ENCODE measurements at regions of chr20 and their contacts with region 1.

Region 1: DNA sequence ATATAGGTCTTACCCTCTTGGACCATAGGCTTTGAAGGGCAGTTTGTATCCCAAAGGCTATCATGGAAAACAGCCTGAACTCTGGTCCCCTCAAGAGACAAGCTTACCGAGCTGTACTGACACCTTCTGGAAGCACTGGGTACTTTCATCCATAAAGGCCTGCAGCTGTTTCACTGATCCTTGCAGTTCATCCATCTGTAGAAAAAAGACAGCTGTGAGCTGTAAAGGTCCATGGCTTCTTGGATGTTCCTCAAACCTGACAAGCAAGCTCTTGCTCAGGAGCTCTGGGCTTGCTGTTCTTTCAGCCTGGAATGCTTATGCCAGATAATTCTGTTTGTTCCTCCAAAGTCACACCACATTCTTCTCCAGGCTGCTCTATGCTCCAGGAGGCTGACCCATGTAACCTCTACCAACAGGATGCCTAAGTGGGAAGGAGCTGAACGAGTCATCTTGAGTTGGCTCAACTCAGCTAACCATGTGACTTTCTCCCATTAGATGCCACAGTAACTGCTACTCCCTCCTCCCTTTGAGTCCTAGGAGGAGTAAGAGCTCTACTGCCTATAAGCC is 8.8 kb upstream of the NDRG3 start:
- DNase-seq: peak; percentile 50 to 80 (median 63)
- H3K4me3 ChIP-seq: no peak overlapping the region
- H3K27ac ChIP-seq: peak overlapping the region in 1 of 5 donors; percentile 47
- H3K4me1 ChIP-seq: peaks cover 0 to 9% of the 10 kb centered on the region in 2 donors
- H3K27me3 ChIP-seq: no peaks in the 10 kb centered on the region
- CTCF ChIP-seq: peak; percentile 63 to 86 (median 82)
- POLR2A ChIP-seq: no peak

Region 2: GRCh38 chr20:36613974-36614373 is 140.8 kb before region 1 on chr20:
- intact Hi-C with region 1: loop called in 1 of 2 experiments (anchors 5 kb)
- DNase-seq: no peak
- H3K4me3 ChIP-seq: no peak overlapping the region
- H3K27ac ChIP-seq: peak overlapping the region in 1 of 5 donors; percentile 31
- H3K4me1 ChIP-seq: no peaks in the 10 kb centered on the region
- H3K27me3 ChIP-seq: no peaks in the 10 kb centered on the region
- CTCF ChIP-seq: no peak
- POLR2A ChIP-seq: no peak

Region 3: DNA sequence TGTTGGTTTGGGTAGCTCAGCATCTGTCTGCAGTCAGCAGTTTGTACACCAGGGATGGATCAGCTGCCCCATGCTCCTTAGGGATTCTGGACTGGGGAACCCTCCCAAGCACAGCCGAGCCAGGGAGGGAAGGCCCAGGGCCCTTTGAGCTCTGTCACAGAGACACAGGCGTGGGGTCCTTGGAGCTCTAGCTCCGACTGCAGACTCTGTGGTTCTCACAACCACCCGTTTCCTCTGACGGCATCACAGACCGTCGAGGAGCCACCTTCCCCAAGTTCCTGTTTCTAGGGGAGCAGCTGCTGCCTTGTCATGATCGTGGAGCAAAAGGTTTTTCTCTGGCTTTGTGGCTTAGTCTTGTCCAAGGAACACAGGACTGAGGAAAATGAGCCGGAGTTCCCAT is 108.7 kb before region 1 on chr20 and contains the start of gene SLA2:
- intact Hi-C with region 1: no loop called
- DNase-seq: peak in 3 of 7 donors; percentile 15 to 30 (median 25)
- H3K4me3 ChIP-seq: no peak within 1 kb of the TSS
- H3K27ac ChIP-seq: no peak within 1 kb of the TSS
- H3K4me1 ChIP-seq: no peaks in the 10 kb centered on the region
- H3K27me3 ChIP-seq: no peaks in the 10 kb centered on the region
- CTCF ChIP-seq: no peak
- POLR2A ChIP-seq: no peak
- total RNA-seq, gene SLA2: 0.12 to 1.1 (median 0.42) TPM